ENCODE measurements at regions of chr6 and their contacts with region 1.

Region 1: DNA sequence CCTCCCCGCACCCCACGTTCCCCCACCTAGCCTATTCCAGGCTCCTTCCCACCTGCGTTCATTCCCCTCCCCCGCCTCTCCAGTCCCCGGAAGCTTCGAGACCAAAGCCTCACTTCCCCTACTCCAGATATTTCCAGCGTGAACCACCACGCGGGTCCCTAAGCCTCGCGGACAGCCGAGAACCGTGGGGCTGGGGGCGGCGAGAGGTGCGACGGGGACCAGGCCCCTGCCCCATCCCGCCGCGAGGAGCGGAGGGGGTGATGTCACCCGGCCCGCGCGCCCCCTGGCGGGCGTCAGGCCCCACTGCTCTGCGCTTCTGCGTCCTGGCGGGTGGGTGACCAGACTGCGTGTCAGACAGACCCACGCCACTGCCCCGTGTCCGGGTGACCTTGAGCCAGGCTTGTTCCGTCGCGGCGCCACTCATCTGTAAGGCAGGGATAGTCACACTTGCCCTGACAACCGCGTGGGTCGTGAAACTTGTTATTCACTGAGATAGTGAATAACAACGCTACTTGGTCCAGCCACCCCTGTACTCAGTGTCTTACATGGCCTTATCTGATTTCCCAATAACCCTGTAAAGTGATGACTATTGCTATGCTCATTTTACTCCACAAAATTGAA is 9.0 kb upstream of the HSP90AB1 start:
- DNase-seq: peak; percentile 93

Region 2: DNA sequence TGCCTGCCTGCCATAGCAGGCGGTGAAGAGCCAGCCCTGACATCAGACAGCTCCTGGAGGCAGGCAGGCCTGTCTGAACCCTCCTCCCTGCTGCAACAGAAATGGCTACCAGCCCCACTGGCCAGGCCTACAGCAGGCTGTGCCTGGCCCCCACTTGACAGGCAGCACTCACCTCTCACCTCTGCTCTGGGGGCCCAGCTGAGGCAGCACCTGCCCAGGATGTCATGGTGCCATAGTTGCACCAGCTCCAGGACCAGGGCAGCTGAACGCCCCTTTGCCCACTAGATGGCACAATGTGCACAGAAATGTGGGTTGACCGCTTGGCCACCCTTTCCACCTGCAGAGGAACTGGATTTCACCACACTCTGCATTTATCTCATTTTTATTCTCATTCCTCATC is 141.3 kb before region 1 on chr6:
- intact Hi-C with region 1: loop called (anchors 5 kb)
- DNase-seq: no peak

Region 3: DNA sequence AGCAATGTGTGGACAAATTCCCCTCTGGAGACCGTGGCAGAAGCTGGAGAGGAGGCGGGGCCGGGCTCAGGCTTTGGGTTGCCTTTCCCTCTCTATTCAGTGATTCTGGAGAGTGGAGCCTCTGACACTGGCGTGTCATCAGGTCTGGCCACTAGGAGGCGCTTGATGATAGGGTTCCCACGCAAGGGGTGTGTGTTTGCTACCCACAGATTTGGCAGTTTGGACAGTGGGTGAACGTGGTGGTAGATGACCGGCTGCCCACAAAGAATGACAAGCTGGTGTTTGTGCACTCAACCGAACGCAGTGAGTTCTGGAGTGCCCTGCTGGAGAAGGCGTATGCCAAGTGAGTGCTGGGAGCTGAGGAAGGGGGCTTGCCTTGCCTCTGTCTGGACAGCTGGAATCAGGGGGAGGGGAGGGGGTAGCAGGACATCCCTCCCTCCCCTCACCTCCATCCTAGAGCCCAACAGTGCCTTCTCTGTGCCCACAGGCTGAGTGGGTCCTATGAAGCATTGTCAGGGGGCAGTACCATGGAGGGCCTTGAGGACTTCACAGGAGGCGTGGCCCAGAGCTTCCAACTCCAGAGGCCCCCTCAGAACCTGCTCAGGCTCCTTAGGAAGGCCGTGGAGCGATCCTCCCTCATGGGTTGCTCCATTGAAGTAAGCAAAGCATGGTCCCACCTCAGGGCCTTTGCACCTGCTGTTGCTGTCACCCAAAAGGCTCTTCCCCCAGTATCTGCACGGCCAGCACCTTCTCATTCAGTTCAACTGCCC is 65.0 kb before region 1 on chr6:
- intact Hi-C with region 1: loop called (anchors 2 kb)
- DNase-seq: peak; percentile 89

Region 4: GRCh38 chr6:44221291-44221960 is 16.5 kb before region 1 on chr6:
- intact Hi-C with region 1: loop called (anchors 1 kb)
- DNase-seq: peak; percentile 95

Region 5: DNA sequence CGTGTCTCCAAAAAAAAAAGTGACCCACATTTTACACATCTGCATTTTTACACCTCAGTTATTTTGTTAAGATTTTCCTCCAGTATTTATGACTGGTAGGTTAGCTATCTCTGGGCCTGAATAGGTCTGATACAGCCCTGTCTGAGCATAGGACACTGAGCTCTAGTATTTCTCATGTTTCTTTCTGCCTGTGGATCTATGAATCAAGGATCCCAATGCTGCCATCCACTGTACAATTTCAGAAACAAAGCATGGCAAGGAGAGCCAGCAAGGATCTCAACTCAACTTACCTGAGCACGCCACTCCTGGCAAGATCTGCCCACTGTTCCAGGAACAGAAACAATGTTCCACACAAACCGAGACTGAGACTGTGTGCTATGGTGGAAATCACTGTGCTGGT is 1969.3 kb after region 1 on chr6:
- intact Hi-C with region 1: no loop called
- DNase-seq: no peak

Measured in cardiac septum (tissue), 1 donor.